GM10248 (cell line): ENCODE measurements at regions of chr10 and their contacts with region 1.

Region 1: GRCh38 chr10:34994565-34995142 is 95.5 kb downstream of the CUL2 start:
- DNase-seq: peak; percentile 81
- CTCF ChIP-seq: peak; percentile 55

Region 2: GRCh38 chr10:35005868-35006267 is 11.2 kb after region 1 on chr10:
- CTCF ChIA-PET with region 1: interaction called, 14 read pairs
- POLR2A ChIA-PET with region 1: no interaction called
- DNase-seq: no peak
- CTCF ChIP-seq: no peak

Region 3: DNA sequence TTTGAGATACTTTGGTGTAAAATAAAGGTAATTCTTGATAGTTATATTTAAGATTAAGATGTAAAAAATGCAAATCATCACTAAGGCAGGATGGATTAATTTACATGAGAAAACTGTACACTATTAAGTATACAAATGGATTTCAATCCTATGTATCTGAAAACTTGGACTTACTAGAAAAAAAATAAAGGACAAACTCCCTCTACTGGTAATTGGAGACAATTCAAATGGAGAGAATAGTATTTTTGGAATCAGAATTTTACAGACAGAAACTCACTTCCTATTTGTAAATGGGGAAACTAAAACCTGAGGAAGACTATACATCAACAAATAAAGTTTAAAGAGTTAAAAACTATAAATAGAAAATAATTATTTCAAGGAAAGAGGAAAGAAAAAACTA is 32.9 kb after region 1 on chr10:
- CTCF ChIA-PET with region 1: interaction called, 10 read pairs
- POLR2A ChIA-PET with region 1: no interaction called
- DNase-seq: no peak
- CTCF ChIP-seq: peak; percentile 14

Region 4: DNA sequence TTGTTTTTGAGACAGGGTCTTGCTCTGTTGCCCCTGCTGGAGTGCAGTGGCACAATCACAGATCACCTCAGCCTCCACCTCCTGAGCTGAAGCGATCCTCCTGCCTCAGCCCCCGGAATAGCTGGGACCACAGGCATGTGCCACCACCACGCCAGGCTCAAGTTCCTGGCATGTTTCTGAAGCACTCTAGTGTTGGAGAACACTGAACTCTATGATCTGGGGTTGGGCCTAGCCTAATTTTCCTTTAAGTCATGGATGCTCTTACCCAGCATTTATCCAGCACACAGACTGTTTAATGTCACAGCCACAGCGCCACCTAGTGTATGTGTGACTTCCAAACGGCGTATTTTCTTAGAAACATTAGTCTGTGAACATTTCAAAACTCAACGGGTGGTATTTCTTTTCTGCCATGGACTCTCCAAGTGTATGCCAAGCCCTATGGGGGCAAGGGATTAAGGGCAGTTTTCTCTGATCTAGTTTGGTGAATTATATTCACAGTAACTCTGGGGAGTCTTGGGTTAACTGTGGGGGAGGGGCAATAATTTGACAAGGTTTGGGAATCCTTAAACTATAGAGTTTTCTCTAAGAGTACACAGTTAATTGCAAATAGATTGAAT is 223.8 kb after region 1 on chr10:
- CTCF ChIA-PET with region 1: interaction called, 20 read pairs
- POLR2A ChIA-PET with region 1: no interaction called
- DNase-seq: peak; percentile 74
- CTCF ChIP-seq: peak; percentile 70